Caco-2 (cell line): ENCODE measurements at regions of chr12 and their contacts with region 1.

Region 1: DNA sequence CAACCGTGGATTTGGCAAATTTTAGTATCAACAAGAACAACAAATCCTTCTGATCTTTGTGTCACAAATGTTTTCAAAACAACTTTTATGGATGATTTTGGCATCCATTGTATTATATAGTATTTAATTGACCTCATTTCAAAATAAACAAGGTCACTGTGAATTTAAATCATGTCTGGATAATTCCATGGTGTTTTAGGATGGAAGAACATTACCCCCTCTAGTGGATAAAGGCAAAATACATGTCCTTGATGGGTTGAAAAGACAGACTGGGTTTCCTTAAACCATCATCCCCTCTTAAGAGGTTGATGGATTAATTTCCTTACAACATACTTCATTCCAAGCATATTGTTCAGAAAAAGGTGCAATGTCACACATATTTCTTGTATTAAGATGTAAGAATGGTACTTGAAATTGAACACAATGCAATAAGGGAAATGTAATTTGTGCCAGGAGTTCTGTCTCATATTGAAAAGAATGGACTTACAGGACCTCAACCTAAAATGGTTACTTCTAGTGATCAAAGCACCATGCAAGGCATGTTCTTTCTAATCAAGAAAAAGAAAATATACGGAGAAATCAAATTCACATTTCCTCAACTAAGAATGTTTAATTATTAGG is 352.0 kb downstream of the BCAT1 start:
- DNase-seq: peak in 1 of 2 experiments; percentile 47
- H3K4me3 ChIP-seq: no peak overlapping the region
- H3K4me3 Mint-ChIP-seq: no peak overlapping the region
- H3K27ac Mint-ChIP-seq: no peak overlapping the region
- H3K4me1 ChIP-seq: no peaks in the 10 kb centered on the region; the same call in 1 of the 2 replicates
- H3K4me1 Mint-ChIP-seq: peaks cover 18% of the 10 kb centered on the region
- H3K27me3 ChIP-seq: no peaks in the 10 kb centered on the region
- H3K27me3 Mint-ChIP-seq: no peaks in the 10 kb centered on the region
- CTCF ChIP-seq: peak; percentile 76 to 79

Region 2: GRCh38 chr12:24012528-24012927 is 584.4 kb before region 1 on chr12:
- CTCF ChIA-PET with region 1: no interaction called
- POLR2A ChIA-PET with region 1: no interaction called
- intact Hi-C with region 1: loop called (anchors 2 kb)
- DNase-seq: peak in 1 of 2 experiments; percentile 47
- H3K4me3 ChIP-seq: no peak overlapping the region
- H3K4me3 Mint-ChIP-seq: no peak overlapping the region
- H3K27ac Mint-ChIP-seq: no peak overlapping the region
- H3K4me1 ChIP-seq: no peaks in the 10 kb centered on the region
- H3K4me1 Mint-ChIP-seq: no peaks in the 10 kb centered on the region
- H3K27me3 ChIP-seq: no peaks in the 10 kb centered on the region
- H3K27me3 Mint-ChIP-seq: no peaks in the 10 kb centered on the region
- CTCF ChIP-seq: peak; percentile 48 to 68

Region 3: DNA sequence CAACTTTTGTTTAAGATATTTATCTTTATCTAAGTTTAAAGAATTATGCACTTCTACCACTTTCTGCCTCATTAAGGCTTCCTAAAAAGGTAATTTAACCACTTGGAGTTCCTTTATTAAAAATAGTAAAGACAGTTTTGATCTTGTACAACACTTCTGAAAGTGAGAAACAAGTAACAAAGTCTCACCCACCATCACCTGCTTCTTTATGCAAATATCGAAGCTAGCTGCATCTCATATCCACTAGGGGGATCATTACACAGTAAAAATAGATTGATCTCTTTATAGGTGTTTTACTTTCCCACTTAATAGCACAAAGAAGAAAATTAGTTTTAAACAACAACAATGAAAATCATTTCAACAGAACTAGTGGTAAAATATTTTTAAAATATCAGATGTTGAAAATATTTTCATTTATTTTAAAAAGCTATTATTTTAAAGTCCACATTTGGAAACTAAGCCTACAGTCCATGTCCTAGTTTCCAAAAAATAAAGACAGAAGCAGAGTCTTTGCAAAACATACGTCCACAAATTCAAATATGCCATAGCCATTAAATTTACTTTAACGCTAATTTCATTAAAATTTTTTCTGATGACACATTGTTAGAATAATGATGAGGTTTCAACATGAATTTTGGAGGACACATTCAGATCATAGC is 487.4 kb before region 1 on chr12:
- CTCF ChIA-PET with region 1: no interaction called
- POLR2A ChIA-PET with region 1: no interaction called
- intact Hi-C with region 1: loop called (anchors 1 kb)
- DNase-seq: peak in 1 of 2 experiments; percentile 36
- H3K4me3 ChIP-seq: no peak overlapping the region
- H3K4me3 Mint-ChIP-seq: no peak overlapping the region
- H3K27ac Mint-ChIP-seq: no peak overlapping the region
- H3K4me1 ChIP-seq: no peaks in the 10 kb centered on the region
- H3K4me1 Mint-ChIP-seq: no peaks in the 10 kb centered on the region
- H3K27me3 ChIP-seq: no peaks in the 10 kb centered on the region
- H3K27me3 Mint-ChIP-seq: no peaks in the 10 kb centered on the region
- CTCF ChIP-seq: peak; percentile 73 to 76

Region 4: GRCh38 chr12:24360907-24361306 is 236.0 kb before region 1 on chr12:
- CTCF ChIA-PET with region 1: no interaction called
- POLR2A ChIA-PET with region 1: no interaction called
- intact Hi-C with region 1: loop called (anchors 10 kb)
- DNase-seq: no peak
- H3K4me3 ChIP-seq: no peak overlapping the region
- H3K4me3 Mint-ChIP-seq: no peak overlapping the region
- H3K27ac Mint-ChIP-seq: no peak overlapping the region
- H3K4me1 ChIP-seq: peaks cover 2% of the 10 kb centered on the region; the same call in 1 of the 2 replicates
- H3K4me1 Mint-ChIP-seq: peaks cover 13% of the 10 kb centered on the region
- H3K27me3 ChIP-seq: no peaks in the 10 kb centered on the region
- H3K27me3 Mint-ChIP-seq: no peaks in the 10 kb centered on the region
- CTCF ChIP-seq: no peak

Region 5: GRCh38 chr12:24561882-24562760 is 34.8 kb before region 1 on chr12:
- CTCF ChIA-PET with region 1: no interaction called
- POLR2A ChIA-PET with region 1: interaction called, 3 read pairs
- intact Hi-C with region 1: loop called (anchors 2 kb)
- DNase-seq: peak; percentile 74 to 82
- H3K4me3 ChIP-seq: peak overlapping the region; percentile 84
- H3K4me3 Mint-ChIP-seq: peak overlapping the region; percentile 94
- H3K27ac Mint-ChIP-seq: peak overlapping the region; percentile 73
- H3K4me1 ChIP-seq: peaks cover 41% of the 10 kb centered on the region; the same call in 1 of the 2 replicates
- H3K4me1 Mint-ChIP-seq: peaks cover 30% of the 10 kb centered on the region
- H3K27me3 ChIP-seq: no peaks in the 10 kb centered on the region
- H3K27me3 Mint-ChIP-seq: no peaks in the 10 kb centered on the region
- CTCF ChIP-seq: no peak

Region 6: DNA sequence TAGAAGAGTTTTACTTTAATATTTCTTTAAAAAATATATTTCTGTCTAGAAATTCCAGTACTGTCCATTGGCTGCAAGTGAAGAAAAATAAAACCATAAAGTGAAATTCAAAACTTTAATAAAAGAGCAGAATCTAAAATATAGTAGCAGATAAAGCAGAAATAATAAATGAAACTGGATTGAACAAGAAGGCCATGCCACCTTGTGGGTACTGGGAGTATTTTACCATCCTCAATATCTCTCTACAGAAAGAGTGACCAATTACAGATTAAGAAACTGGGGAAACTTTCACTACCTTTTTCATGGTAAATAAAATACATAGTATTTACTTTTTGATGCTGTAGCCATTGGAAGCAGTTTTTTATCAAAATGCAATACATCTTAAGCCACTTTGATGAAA is 131.5 kb after region 1 on chr12:
- CTCF ChIA-PET with region 1: no interaction called
- POLR2A ChIA-PET with region 1: no interaction called
- intact Hi-C with region 1: loop called (anchors 2 kb)
- DNase-seq: peak in 1 of 2 experiments; percentile 42
- H3K4me3 ChIP-seq: no peak overlapping the region
- H3K4me3 Mint-ChIP-seq: no peak overlapping the region
- H3K27ac Mint-ChIP-seq: no peak overlapping the region
- H3K4me1 ChIP-seq: peaks cover 6% of the 10 kb centered on the region; the same call in 1 of the 2 replicates
- H3K4me1 Mint-ChIP-seq: peaks cover 8% of the 10 kb centered on the region
- H3K27me3 ChIP-seq: no peaks in the 10 kb centered on the region
- H3K27me3 Mint-ChIP-seq: no peaks in the 10 kb centered on the region
- CTCF ChIP-seq: peak; percentile 63 to 84